ENCODE measurements at regions of chr1 and their contacts with region 1.

Region 1: DNA sequence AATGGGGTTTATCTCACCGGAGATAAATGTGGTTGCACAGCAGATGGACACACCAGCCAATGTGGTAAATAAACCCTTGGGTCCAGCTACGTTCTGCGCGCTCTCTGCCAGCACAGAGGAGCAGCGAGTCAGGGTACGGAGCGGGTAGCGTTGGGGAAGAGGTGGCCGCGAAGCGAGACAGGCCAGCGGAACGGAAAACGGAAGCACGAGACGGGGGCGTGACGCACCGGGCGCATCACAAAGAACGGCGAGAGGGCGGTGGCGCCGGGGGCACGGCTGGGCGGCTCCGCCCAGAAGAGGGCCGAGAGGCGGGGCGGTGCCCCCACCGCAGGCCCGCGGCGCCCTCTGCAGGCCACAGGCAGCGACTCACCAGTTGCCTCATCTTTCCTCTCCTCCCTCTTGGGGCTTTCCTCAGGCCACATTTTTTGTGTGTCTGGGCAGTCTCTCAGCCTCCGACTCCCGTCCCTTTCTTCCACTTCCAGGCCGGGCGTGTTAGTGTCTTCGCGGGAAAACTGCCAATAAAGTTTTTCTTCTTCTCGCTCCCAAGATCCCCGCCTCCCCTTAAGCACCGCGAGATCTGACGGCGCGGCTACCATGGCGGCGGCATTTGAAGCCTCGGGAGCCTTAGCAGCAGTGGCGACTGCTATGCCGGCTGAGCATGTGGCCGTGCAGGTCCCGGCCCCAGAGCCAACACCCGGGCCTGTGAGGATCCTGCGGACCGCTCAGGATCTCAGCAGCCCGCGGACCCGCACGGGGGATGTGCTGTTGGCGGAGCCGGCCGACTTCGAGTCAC is at the start of gene DDX20:
- DNase-seq: peak; percentile 95
- H3K4me3 ChIP-seq: peak within 1 kb of the TSS; percentile 83
- H3K27ac ChIP-seq: peak within 1 kb of the TSS; percentile 81
- H3K4me1 ChIP-seq: peaks cover 59% of the 10 kb centered on the region
- CTCF ChIP-seq: peak; percentile 94
- total RNA-seq, gene DDX20: 28.8 and 32.9 TPM in 2 replicates

Region 2: GRCh38 chr1:110630839-110631663 is 1124.5 kb before region 1 on chr1:
- CTCF ChIA-PET with region 1: no interaction called
- POLR2A ChIA-PET with region 1: no interaction called
- intact Hi-C with region 1: loop called (anchors 10 kb)
- DNase-seq: peak; percentile 91
- H3K4me3 ChIP-seq: peak overlapping the region; percentile 32
- H3K27ac ChIP-seq: peak overlapping the region; percentile 86
- H3K4me1 ChIP-seq: peaks cover 79% of the 10 kb centered on the region
- CTCF ChIP-seq: peak; percentile 92

Region 3: DNA sequence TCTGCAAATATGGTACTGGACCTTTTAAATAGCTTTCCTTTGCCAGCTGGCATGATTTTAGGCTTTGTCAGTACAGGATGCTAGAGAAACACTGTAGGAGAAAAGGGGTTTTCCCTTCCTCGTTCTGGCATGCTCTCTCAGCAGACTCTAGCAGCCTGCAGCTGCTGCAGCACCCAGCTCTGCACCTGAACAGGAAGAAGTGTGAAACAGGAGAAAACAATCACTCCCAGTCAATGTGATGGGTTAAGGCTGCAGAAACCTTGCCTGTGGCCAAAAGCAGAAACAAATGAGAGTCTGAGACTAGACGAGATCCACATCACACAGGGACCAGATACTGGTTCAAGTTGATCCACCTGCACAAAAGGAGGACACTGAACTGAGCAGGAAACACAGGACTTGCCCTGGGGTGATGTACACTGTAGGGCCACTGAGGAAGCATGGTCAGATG is 349.2 kb before region 1 on chr1:
- CTCF ChIA-PET with region 1: no interaction called
- POLR2A ChIA-PET with region 1: no interaction called
- intact Hi-C with region 1: loop called (anchors 5 kb)
- DNase-seq: peak; percentile 97
- H3K4me3 ChIP-seq: peak overlapping the region; percentile 46
- H3K27ac ChIP-seq: peak overlapping the region; percentile 94
- H3K4me1 ChIP-seq: peaks cover 61% of the 10 kb centered on the region
- CTCF ChIP-seq: no peak

Region 4: GRCh38 chr1:111619635-111620440 is 135.7 kb before region 1 on chr1 and contains the start of gene RAP1A:
- CTCF ChIA-PET with region 1: interaction called, 4 read pairs
- POLR2A ChIA-PET with region 1: interaction called, 3 read pairs
- intact Hi-C with region 1: loop called (anchors 10 kb)
- DNase-seq: peak; percentile 92
- H3K4me3 ChIP-seq: peak within 1 kb of the TSS; percentile 94
- H3K27ac ChIP-seq: peak within 1 kb of the TSS; percentile 53
- H3K4me1 ChIP-seq: peaks cover 79% of the 10 kb centered on the region
- CTCF ChIP-seq: no peak
- total RNA-seq, gene RAP1A: 8.5 and 10.4 TPM in 2 replicates

Region 5: GRCh38 chr1:111739194-111739924 is 16.2 kb before region 1 on chr1 and contains the start of gene INKA2:
- CTCF ChIA-PET with region 1: interaction called, 13 read pairs
- POLR2A ChIA-PET with region 1: interaction called, 26 read pairs
- intact Hi-C with region 1: loop called (anchors 1 kb)
- DNase-seq: peak; percentile 87
- H3K4me3 ChIP-seq: peak within 1 kb of the TSS; percentile 78
- H3K27ac ChIP-seq: peak within 1 kb of the TSS; percentile 44
- H3K4me1 ChIP-seq: peaks cover 32% of the 10 kb centered on the region
- CTCF ChIP-seq: no peak; the same call in 1 of the 2 replicates
- total RNA-seq, gene INKA2: 3.9 and 4.1 TPM in 2 replicates